ENCODE measurements at regions of chr10 and their contacts with region 1.

Region 1: GRCh38 chr10:12195603-12196506 is at the starts of genes CDC123 and NUDT5:
- DNase-seq: peak; percentile 73 to 93 (median 79)
- ATAC-seq: peak; percentile 91
- H3K4me3 ChIP-seq: peak within 1 kb of the TSS; percentile 88
- H3K4me3 Mint-ChIP-seq: peak within 1 kb of the TSS; percentile 97
- H3K27ac ChIP-seq: peak within 1 kb of the TSS; percentile 94 to 96
- H3K27ac Mint-ChIP-seq: peak within 1 kb of the TSS; percentile 96
- H3K4me1 ChIP-seq: peaks cover 27% of the 10 kb centered on the region
- H3K4me1 Mint-ChIP-seq: peaks cover 70% of the 10 kb centered on the region
- H3K27me3 ChIP-seq: no peaks in the 10 kb centered on the region
- H3K27me3 Mint-ChIP-seq: no peaks in the 10 kb centered on the region
- CTCF ChIP-seq: no peak
- total RNA-seq, gene CDC123: 34.7 to 40.5 TPM
- total RNA-seq, gene NUDT5: 11.6 to 13.5 TPM

Region 2: GRCh38 chr10:12042797-12043651 is 152.8 kb before region 1 on chr10 and contains the start of gene UPF2:
- CTCF ChIA-PET with region 1: no interaction called
- POLR2A ChIA-PET with region 1: interaction called, 16 read pairs
- intact Hi-C with region 1: loop called in 1 of 2 experiments (anchors 2 kb)
- DNase-seq: peak; percentile 94 to 99 (median 96)
- ATAC-seq: peak; percentile 87
- H3K4me3 ChIP-seq: peak within 1 kb of the TSS; percentile 99
- H3K4me3 Mint-ChIP-seq: peak within 1 kb of the TSS; percentile 98
- H3K27ac ChIP-seq: peak within 1 kb of the TSS; percentile 98 to 100
- H3K27ac Mint-ChIP-seq: peak within 1 kb of the TSS; percentile 100
- H3K4me1 ChIP-seq: peaks cover 17% of the 10 kb centered on the region
- H3K4me1 Mint-ChIP-seq: peaks cover 33% of the 10 kb centered on the region
- H3K27me3 ChIP-seq: no peaks in the 10 kb centered on the region
- H3K27me3 Mint-ChIP-seq: no peaks in the 10 kb centered on the region
- CTCF ChIP-seq: no peak
- total RNA-seq, gene UPF2: 14.5 to 15.3 TPM

Region 3: GRCh38 chr10:12068449-12069269 is 127.2 kb before region 1 on chr10 and contains the start of gene DHTKD1:
- CTCF ChIA-PET with region 1: no interaction called
- POLR2A ChIA-PET with region 1: interaction called, 3 read pairs
- intact Hi-C with region 1: loop called in 1 of 2 experiments (anchors 10 kb)
- DNase-seq: peak; percentile 95 to 99 (median 98)
- ATAC-seq: peak; percentile 98
- H3K4me3 ChIP-seq: peak within 1 kb of the TSS; percentile 85
- H3K4me3 Mint-ChIP-seq: peak within 1 kb of the TSS; percentile 91
- H3K27ac ChIP-seq: peak within 1 kb of the TSS; percentile 73 to 78
- H3K27ac Mint-ChIP-seq: peak within 1 kb of the TSS; percentile 95
- H3K4me1 ChIP-seq: peaks cover 15% of the 10 kb centered on the region
- H3K4me1 Mint-ChIP-seq: peaks cover 16% of the 10 kb centered on the region
- H3K27me3 ChIP-seq: no peaks in the 10 kb centered on the region
- H3K27me3 Mint-ChIP-seq: no peaks in the 10 kb centered on the region
- CTCF ChIP-seq: peak; percentile 27
- total RNA-seq, gene DHTKD1: 5.1 to 5.3 TPM

Region 4: GRCh38 chr10:12129222-12130111 is 66.4 kb before region 1 on chr10 and contains the start of gene SEC61A2:
- CTCF ChIA-PET with region 1: interaction called, 4 read pairs
- POLR2A ChIA-PET with region 1: interaction called, 4 read pairs
- intact Hi-C with region 1: loop called (anchors 2 to 10 kb)
- DNase-seq: peak; percentile 91 to 99 (median 98)
- ATAC-seq: peak; percentile 88
- H3K4me3 ChIP-seq: peak within 1 kb of the TSS; percentile 79
- H3K4me3 Mint-ChIP-seq: peak within 1 kb of the TSS; percentile 96
- H3K27ac ChIP-seq: peak within 1 kb of the TSS; percentile 76 to 79
- H3K27ac Mint-ChIP-seq: peak within 1 kb of the TSS; percentile 83
- H3K4me1 ChIP-seq: peaks cover 21% of the 10 kb centered on the region
- H3K4me1 Mint-ChIP-seq: peaks cover 25% of the 10 kb centered on the region
- H3K27me3 ChIP-seq: no peaks in the 10 kb centered on the region
- H3K27me3 Mint-ChIP-seq: no peaks in the 10 kb centered on the region
- CTCF ChIP-seq: no peak
- total RNA-seq, gene SEC61A2: 9.9 to 10.8 TPM

Region 5: DNA sequence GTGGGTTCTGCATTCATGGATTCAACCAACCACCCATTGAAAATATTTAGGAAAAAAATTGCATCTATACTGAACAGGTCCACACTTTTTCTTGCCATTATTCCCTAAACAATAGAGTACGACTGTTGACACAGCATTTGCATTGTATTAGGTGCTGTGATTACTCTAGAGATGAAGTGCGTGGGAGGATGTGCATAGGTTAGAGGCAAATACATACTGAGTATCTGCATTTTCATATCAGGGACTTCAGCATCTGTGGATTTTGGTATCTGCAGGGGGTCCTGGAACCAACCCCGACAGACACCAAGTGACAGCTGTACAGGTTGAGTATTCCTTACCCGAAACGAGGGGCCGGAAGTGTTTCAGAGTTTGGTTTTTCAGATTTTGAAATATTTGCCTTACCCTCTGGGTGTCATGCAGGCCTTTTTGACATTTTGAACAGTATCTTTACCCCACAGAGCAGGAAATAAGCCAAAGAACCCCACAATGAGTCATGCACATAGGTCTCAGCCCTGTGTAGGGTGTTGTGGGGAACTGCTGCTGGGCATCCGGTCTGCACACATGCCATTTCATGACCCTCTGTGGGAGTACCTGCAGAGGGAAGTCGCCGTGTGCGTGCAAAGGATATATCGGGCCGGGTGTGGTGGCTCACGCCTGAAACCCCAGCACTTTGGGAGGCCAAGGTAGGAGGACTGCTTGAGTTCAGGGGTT is 14.6 kb before region 1 on chr10:
- CTCF ChIA-PET with region 1: interaction called, 5 read pairs
- POLR2A ChIA-PET with region 1: interaction called, 13 read pairs
- intact Hi-C with region 1: loop called in 1 of 2 experiments (anchors 2 kb)
- DNase-seq: peak; percentile 22 to 91 (median 63)
- ATAC-seq: peak; percentile 97
- H3K4me3 ChIP-seq: no peak overlapping the region
- H3K4me3 Mint-ChIP-seq: peak overlapping the region; percentile 42
- H3K27ac ChIP-seq: peak overlapping the region in 1 of 2 donors; percentile 56
- H3K27ac Mint-ChIP-seq: peak overlapping the region; percentile 92
- H3K4me1 ChIP-seq: peaks cover 22% of the 10 kb centered on the region
- H3K4me1 Mint-ChIP-seq: peaks cover 19% of the 10 kb centered on the region
- H3K27me3 ChIP-seq: no peaks in the 10 kb centered on the region
- H3K27me3 Mint-ChIP-seq: no peaks in the 10 kb centered on the region
- CTCF ChIP-seq: no peak

Region 6: DNA sequence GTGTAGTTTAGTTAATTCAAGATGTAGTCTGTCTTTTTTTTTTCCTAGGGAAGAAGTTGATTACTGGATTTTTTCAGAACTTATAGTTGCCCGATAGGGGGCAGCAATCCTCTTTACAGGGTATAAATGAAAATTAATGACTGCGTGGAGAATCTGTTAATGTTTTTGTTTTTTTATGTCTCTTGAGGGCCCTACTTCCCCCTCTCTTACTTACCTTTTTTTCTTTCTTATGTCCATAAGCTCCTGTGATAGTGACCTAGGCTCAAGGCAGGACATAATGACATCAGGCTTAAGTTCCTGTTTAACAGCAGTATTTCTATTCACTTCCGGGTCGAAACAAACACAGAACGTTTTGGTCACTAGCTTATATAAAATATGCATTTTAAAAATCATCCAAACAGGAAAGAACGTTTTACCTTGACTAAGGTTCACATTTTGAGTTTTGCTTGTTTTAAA is 18.9 kb after region 1 on chr10:
- CTCF ChIA-PET with region 1: interaction called, 20 read pairs
- POLR2A ChIA-PET with region 1: interaction called, 24 read pairs
- intact Hi-C with region 1: loop called in 1 of 2 experiments (anchors 2 kb)
- DNase-seq: peak in 9 of 14 experiments; percentile 8 to 77 (median 36)
- ATAC-seq: peak; percentile 52
- H3K4me3 ChIP-seq: peak overlapping the region; percentile 20
- H3K4me3 Mint-ChIP-seq: peak overlapping the region; percentile 62
- H3K27ac ChIP-seq: no peak overlapping the region
- H3K27ac Mint-ChIP-seq: peak overlapping the region; percentile 76
- H3K4me1 ChIP-seq: no peaks in the 10 kb centered on the region
- H3K4me1 Mint-ChIP-seq: peaks cover 29% of the 10 kb centered on the region
- H3K27me3 ChIP-seq: no peaks in the 10 kb centered on the region
- H3K27me3 Mint-ChIP-seq: no peaks in the 10 kb centered on the region
- CTCF ChIP-seq: peak; percentile 86

Region 7: GRCh38 chr10:12340371-12340770 is 144.5 kb after region 1 on chr10:
- CTCF ChIA-PET with region 1: no interaction called
- POLR2A ChIA-PET with region 1: no interaction called
- intact Hi-C with region 1: no loop called
- DNase-seq: no peak
- ATAC-seq: no peak
- H3K4me3 ChIP-seq: no peak overlapping the region
- H3K4me3 Mint-ChIP-seq: no peak overlapping the region
- H3K27ac ChIP-seq: no peak overlapping the region
- H3K27ac Mint-ChIP-seq: no peak overlapping the region
- H3K4me1 ChIP-seq: no peaks in the 10 kb centered on the region
- H3K4me1 Mint-ChIP-seq: peaks cover 11% of the 10 kb centered on the region
- H3K27me3 ChIP-seq: no peaks in the 10 kb centered on the region
- H3K27me3 Mint-ChIP-seq: no peaks in the 10 kb centered on the region
- CTCF ChIP-seq: no peak

Region 8: GRCh38 chr10:12844811-12845533 is 649.1 kb after region 1 on chr10:
- CTCF ChIA-PET with region 1: no interaction called
- POLR2A ChIA-PET with region 1: no interaction called
- intact Hi-C with region 1: no loop called
- DNase-seq: no peak
- ATAC-seq: no peak
- H3K4me3 ChIP-seq: no peak overlapping the region
- H3K4me3 Mint-ChIP-seq: no peak overlapping the region
- H3K27ac ChIP-seq: no peak overlapping the region
- H3K27ac Mint-ChIP-seq: no peak overlapping the region
- H3K4me1 ChIP-seq: no peaks in the 10 kb centered on the region
- H3K4me1 Mint-ChIP-seq: no peaks in the 10 kb centered on the region
- H3K27me3 ChIP-seq: peaks cover 4 to 15% of the 10 kb centered on the region in 2 experiments
- H3K27me3 Mint-ChIP-seq: peaks cover 31% of the 10 kb centered on the region
- CTCF ChIP-seq: no peak

Region 9: DNA sequence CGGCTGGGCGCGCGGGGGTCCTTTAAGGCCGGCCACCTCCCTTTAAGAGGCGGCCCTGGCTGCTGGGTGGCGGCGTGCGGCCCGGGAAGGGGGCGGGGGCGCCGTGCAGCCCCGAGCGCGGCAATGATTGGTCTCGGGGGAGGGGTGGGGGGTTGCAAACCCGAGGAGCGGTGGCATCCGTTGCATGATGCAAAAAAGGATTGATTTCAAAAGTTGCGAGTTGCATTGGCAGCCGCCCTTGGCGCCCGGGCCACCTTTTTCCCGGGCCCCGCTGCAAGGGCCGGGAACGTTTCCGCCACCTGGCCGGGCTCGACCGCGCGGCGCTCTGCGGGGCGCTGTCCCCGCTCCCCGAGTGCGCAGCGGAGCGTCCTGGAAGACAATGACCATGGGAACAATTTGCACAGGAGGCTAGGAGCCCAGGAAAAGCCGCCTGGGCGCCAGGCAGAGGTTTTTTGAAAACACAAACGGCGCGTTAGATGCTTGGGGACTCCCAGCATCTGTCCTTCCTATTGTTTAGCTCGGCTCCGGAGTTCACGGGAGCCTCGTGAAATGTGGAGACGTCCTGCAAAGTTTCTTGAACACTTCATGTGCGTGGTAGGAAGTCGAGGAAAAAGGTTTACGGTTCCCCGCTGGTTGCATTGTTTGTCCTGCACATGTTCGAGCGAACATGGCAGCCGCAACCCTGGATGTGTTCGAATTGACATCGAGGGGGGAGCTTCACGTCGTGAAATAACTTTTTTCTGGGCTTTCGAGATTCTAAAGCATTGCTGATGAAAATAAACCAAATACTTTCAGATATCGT is 1152.6 kb after region 1 on chr10 and contains the start of gene SEPHS1:
- CTCF ChIA-PET with region 1: no interaction called
- POLR2A ChIA-PET with region 1: no interaction called
- intact Hi-C with region 1: loop called in 1 of 2 experiments (anchors 10 kb)
- DNase-seq: peak; percentile 67 to 91 (median 81)
- ATAC-seq: peak; percentile 69
- H3K4me3 ChIP-seq: peak within 1 kb of the TSS; percentile 91
- H3K4me3 Mint-ChIP-seq: peak within 1 kb of the TSS; percentile 98
- H3K27ac ChIP-seq: peak within 1 kb of the TSS; percentile 63 to 83
- H3K27ac Mint-ChIP-seq: peak within 1 kb of the TSS; percentile 93
- H3K4me1 ChIP-seq: peaks cover 50% of the 10 kb centered on the region
- H3K4me1 Mint-ChIP-seq: peaks cover 69% of the 10 kb centered on the region
- H3K27me3 ChIP-seq: no peaks in the 10 kb centered on the region
- H3K27me3 Mint-ChIP-seq: no peaks in the 10 kb centered on the region
- CTCF ChIP-seq: no peak
- total RNA-seq, gene SEPHS1: 13.1 to 17.9 TPM